ENCODE measurements at regions of chr10 and their contacts with region 1.

Region 1: GRCh38 chr10:124289851-124290795 is 128.6 kb downstream of the OAT start:
- DNase-seq: peak; percentile 90 to 96 (median 92)
- H3K4me3 ChIP-seq: peak overlapping the region in 1 of 3 experiments; percentile 9
- H3K4me3 Mint-ChIP-seq: peak overlapping the region in 1 of 2 donors; percentile 69
- H3K27ac ChIP-seq: peak overlapping the region; percentile 95 to 97
- H3K27ac Mint-ChIP-seq: peak overlapping the region; percentile 98 to 99 (median 99)
- H3K4me1 ChIP-seq: peaks cover 74 to 80% of the 10 kb centered on the region in 2 donors
- H3K4me1 Mint-ChIP-seq: peaks cover 80% of the 10 kb centered on the region
- H3K27me3 ChIP-seq: no peaks in the 10 kb centered on the region
- H3K27me3 Mint-ChIP-seq: peaks cover 0 to 12% (median 1%) of the 10 kb centered on the region in 3 donors
- CTCF ChIP-seq: no peak

Region 2: DNA sequence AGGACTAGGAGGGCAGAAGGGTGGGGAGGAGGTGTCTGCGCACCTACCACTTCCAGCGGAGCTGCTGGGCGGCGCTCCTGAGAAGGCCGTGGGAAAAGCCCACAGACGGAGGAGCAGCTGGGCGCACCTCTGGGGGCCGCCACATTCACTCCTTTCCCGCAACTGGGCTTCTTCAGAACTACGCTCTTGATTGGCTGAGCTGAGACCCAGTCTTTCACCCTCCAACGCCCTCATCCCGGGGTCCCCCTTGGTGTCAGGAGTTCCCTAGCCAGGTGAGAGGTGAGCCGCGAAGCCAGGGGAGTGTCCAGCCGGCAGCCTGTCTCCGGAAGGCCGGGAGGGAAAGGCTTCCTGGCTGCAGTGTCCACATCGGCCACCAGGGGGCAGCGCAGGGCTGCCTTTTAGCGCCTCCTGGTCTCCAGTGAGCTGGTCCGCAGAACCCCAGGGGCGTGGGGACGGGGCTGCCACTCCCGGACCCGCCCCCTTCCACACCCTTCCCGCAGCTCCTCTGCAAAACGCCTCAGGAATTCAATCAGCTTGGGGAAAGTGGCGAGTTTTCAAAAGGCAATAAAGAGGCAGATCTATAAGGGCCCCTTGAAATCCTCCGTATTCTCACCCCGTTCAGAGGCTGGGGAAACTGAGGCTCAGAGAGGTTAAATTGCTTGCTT is 295.6 kb before region 1 on chr10:
- intact Hi-C with region 1: loop called in 1 of 2 experiments (anchors 2 kb)
- DNase-seq: peak; percentile 81 to 83 (median 81)
- H3K4me3 ChIP-seq: peak overlapping the region; percentile 21 to 75 (median 28)
- H3K4me3 Mint-ChIP-seq: peak overlapping the region; percentile 74 to 79
- H3K27ac ChIP-seq: peak overlapping the region in 1 of 2 donors; percentile 98
- H3K27ac Mint-ChIP-seq: peak overlapping the region; percentile 57 to 100 (median 98)
- H3K4me1 ChIP-seq: peaks cover 56 to 64% of the 10 kb centered on the region in 2 donors
- H3K4me1 Mint-ChIP-seq: peaks cover 63% of the 10 kb centered on the region
- H3K27me3 ChIP-seq: peaks cover 31 to 46% of the 10 kb centered on the region in 2 donors
- H3K27me3 Mint-ChIP-seq: peaks cover 47 to 58% (median 51%) of the 10 kb centered on the region in 3 donors
- CTCF ChIP-seq: peak; percentile 98

Region 3: GRCh38 chr10:124074501-124075109 is 215.5 kb before region 1 on chr10:
- intact Hi-C with region 1: no loop called
- DNase-seq: peak; percentile 79 to 81 (median 81)
- H3K4me3 ChIP-seq: peak overlapping the region in 1 of 3 experiments; percentile 2
- H3K4me3 Mint-ChIP-seq: peak overlapping the region; percentile 61 to 62
- H3K27ac ChIP-seq: peak overlapping the region; percentile 26 to 55
- H3K27ac Mint-ChIP-seq: peak overlapping the region; percentile 31 to 93 (median 84)
- H3K4me1 ChIP-seq: peaks cover 35 to 57% of the 10 kb centered on the region in 2 donors
- H3K4me1 Mint-ChIP-seq: peaks cover 51% of the 10 kb centered on the region
- H3K27me3 ChIP-seq: no peaks in the 10 kb centered on the region
- H3K27me3 Mint-ChIP-seq: peaks cover 4 to 16% (median 8%) of the 10 kb centered on the region in 3 donors
- CTCF ChIP-seq: no peak

Region 4: DNA sequence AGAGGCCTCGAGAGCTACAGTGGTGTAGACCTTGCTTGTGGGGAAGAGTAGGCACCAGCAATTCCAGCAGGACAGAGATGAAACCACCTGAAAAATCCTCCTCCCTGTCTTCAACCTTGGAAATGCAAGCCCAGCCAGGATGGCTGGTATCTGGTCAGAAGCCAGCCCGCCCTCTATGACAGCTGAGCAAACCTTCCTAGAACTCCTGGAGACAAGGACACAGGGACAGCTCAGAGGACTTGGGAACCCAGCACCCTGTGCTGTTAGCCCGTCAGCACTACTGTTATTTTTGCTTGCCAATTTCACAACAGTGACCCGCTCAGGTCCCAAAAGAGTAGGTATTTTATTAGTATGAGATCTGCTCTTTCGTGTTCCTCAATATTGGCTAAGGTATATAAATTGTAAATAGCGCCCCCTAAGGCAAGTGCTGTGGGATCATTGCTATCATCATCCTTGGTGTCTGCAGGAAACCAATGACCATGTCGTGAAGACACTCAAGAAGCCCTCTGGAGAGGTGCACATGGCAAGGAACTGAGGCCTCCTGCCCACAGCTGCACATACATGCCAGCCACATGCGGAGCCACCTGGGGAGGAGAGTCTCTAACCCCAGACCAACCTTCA is 40.2 kb before region 1 on chr10:
- intact Hi-C with region 1: loop called in 1 of 2 experiments (anchors 5 kb)
- DNase-seq: no peak
- H3K4me3 ChIP-seq: peak overlapping the region in 1 of 3 experiments; percentile 62
- H3K4me3 Mint-ChIP-seq: no peak overlapping the region
- H3K27ac ChIP-seq: peak overlapping the region in 1 of 2 donors; percentile 92
- H3K27ac Mint-ChIP-seq: peak overlapping the region in 3 of 7 donors; percentile 90 to 96 (median 95)
- H3K4me1 ChIP-seq: peaks cover 52 to 59% of the 10 kb centered on the region in 2 donors
- H3K4me1 Mint-ChIP-seq: peaks cover 59% of the 10 kb centered on the region
- H3K27me3 ChIP-seq: no peaks in the 10 kb centered on the region
- H3K27me3 Mint-ChIP-seq: peaks cover 4 to 9% (median 5%) of the 10 kb centered on the region in 3 donors
- CTCF ChIP-seq: peak; percentile 29

Region 5: GRCh38 chr10:124306922-124307371 is 16.8 kb after region 1 on chr10:
- intact Hi-C with region 1: loop called in 1 of 2 experiments (anchors 2 kb)
- DNase-seq: peak; percentile 93 to 98 (median 98)
- H3K4me3 ChIP-seq: no peak overlapping the region
- H3K4me3 Mint-ChIP-seq: no peak overlapping the region
- H3K27ac ChIP-seq: peak overlapping the region; percentile 87 to 91
- H3K27ac Mint-ChIP-seq: peak overlapping the region in 1 of 7 donors; percentile 95
- H3K4me1 ChIP-seq: peaks cover 29 to 37% of the 10 kb centered on the region in 2 donors
- H3K4me1 Mint-ChIP-seq: peaks cover 18% of the 10 kb centered on the region
- H3K27me3 ChIP-seq: no peaks in the 10 kb centered on the region
- H3K27me3 Mint-ChIP-seq: peaks cover 0 to 2% (median 0%) of the 10 kb centered on the region in 3 donors
- CTCF ChIP-seq: no peak

Region 6: DNA sequence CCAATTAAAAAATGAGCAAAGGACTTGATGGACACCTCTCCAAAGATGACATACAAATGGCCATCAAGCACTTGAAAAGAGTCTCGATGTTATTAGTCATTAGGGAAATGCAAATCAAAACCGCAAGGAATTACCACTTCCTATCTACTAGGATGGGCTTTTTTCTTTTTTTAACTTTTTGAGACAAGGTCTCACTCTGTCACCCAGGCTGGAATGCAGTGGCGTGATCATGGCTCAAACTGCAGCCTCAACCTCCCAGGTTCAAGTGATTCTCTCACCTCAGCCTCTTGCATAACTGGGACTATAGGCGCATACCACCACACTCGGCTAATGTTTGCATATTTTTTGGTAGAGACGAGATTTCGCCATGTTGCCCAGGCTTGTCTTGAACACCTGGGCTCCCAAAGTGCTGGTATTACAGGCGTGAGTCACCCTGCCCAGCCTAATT is 146.1 kb after region 1 on chr10:
- intact Hi-C with region 1: no loop called
- DNase-seq: peak; percentile 23 to 59 (median 42)
- H3K4me3 ChIP-seq: no peak overlapping the region
- H3K4me3 Mint-ChIP-seq: peak overlapping the region in 1 of 2 donors; percentile 51
- H3K27ac ChIP-seq: no peak overlapping the region
- H3K27ac Mint-ChIP-seq: no peak overlapping the region
- H3K4me1 ChIP-seq: peaks cover 0 to 10% of the 10 kb centered on the region in 2 donors
- H3K4me1 Mint-ChIP-seq: peaks cover 9% of the 10 kb centered on the region
- H3K27me3 ChIP-seq: no peaks in the 10 kb centered on the region
- H3K27me3 Mint-ChIP-seq: peaks cover 15 to 33% (median 22%) of the 10 kb centered on the region in 3 donors
- CTCF ChIP-seq: no peak